ENCODE measurements at regions of chr13 and their contacts with region 1.

Region 1: DNA sequence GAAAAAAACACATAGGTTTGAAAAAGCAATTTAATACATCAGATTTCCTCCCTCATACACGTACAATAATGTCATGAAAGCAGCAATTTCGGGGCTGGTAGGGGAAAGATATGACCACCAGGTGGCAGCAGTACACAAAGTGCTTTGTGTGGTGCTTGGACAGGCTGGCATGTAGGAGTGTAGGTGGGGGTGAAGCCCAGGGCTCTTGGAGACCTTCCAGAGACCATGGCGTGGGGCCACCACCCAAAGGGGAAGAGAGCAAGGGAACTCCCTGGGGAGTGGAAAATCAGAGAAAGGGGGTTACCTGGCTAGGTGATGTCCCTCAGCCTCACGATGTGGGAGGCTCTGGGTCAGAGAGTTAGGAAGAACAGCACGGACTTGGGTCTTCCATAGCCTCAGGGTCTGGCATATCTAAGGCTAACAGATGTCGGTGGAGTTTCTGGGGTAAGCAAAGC is 11.8 kb upstream of the CCNA1 start:
- DNase-seq: peak; percentile 76
- ATAC-seq: peak; percentile 80
- H3K4me3 ChIP-seq: no peak overlapping the region
- H3K4me3 Mint-ChIP-seq: no peak overlapping the region
- H3K27ac ChIP-seq: no peak overlapping the region
- H3K27ac Mint-ChIP-seq: no peak overlapping the region
- H3K4me1 ChIP-seq: peaks cover 0 to 9% of the 10 kb centered on the region in 2 donors
- H3K4me1 Mint-ChIP-seq: peaks cover 6% of the 10 kb centered on the region
- H3K27me3 ChIP-seq: peaks cover 0 to 7% (median 2%) of the 10 kb centered on the region in 4 experiments
- H3K27me3 Mint-ChIP-seq: peaks cover 36% of the 10 kb centered on the region
- CTCF ChIP-seq: peak; percentile 97

Region 2: GRCh38 chr13:36346222-36347083 is 74.0 kb before region 1 on chr13 and contains the start of gene SPART:
- CTCF ChIA-PET with region 1: interaction called, 7 read pairs
- POLR2A ChIA-PET with region 1: no interaction called
- intact Hi-C with region 1: loop called (anchors 2 kb)
- DNase-seq: peak; percentile 92
- ATAC-seq: peak; percentile 85
- H3K4me3 ChIP-seq: peak within 1 kb of the TSS; percentile 64 to 98 (median 85)
- H3K4me3 Mint-ChIP-seq: peak within 1 kb of the TSS; percentile 95
- H3K27ac ChIP-seq: peak within 1 kb of the TSS; percentile 93 to 96
- H3K27ac Mint-ChIP-seq: peak within 1 kb of the TSS; percentile 96
- H3K4me1 ChIP-seq: peaks cover 10 to 16% of the 10 kb centered on the region in 2 donors
- H3K4me1 Mint-ChIP-seq: peaks cover 24% of the 10 kb centered on the region
- H3K27me3 ChIP-seq: no peaks in the 10 kb centered on the region
- H3K27me3 Mint-ChIP-seq: peaks cover 14% of the 10 kb centered on the region
- CTCF ChIP-seq: peak; percentile 88
- total RNA-seq, gene SPART: 18.6 and 20.8 TPM in 2 replicates

Region 3: GRCh38 chr13:36382030-36382429 is 38.4 kb before region 1 on chr13:
- CTCF ChIA-PET with region 1: no interaction called
- POLR2A ChIA-PET with region 1: no interaction called
- intact Hi-C with region 1: no loop called
- DNase-seq: no peak
- ATAC-seq: no peak
- H3K4me3 ChIP-seq: no peak overlapping the region
- H3K4me3 Mint-ChIP-seq: no peak overlapping the region
- H3K27ac ChIP-seq: no peak overlapping the region
- H3K27ac Mint-ChIP-seq: no peak overlapping the region
- H3K4me1 ChIP-seq: no peaks in the 10 kb centered on the region
- H3K4me1 Mint-ChIP-seq: no peaks in the 10 kb centered on the region
- H3K27me3 ChIP-seq: peaks cover 0 to 3% (median 0%) of the 10 kb centered on the region in 4 experiments
- H3K27me3 Mint-ChIP-seq: peaks cover 15% of the 10 kb centered on the region
- CTCF ChIP-seq: no peak

Region 4: GRCh38 chr13:36493046-36493445 is 72.6 kb after region 1 on chr13:
- CTCF ChIA-PET with region 1: no interaction called
- POLR2A ChIA-PET with region 1: no interaction called
- intact Hi-C with region 1: no loop called
- DNase-seq: no peak
- ATAC-seq: no peak
- H3K4me3 ChIP-seq: no peak overlapping the region
- H3K4me3 Mint-ChIP-seq: no peak overlapping the region
- H3K27ac ChIP-seq: no peak overlapping the region
- H3K27ac Mint-ChIP-seq: no peak overlapping the region
- H3K4me1 ChIP-seq: no peaks in the 10 kb centered on the region
- H3K4me1 Mint-ChIP-seq: no peaks in the 10 kb centered on the region
- H3K27me3 ChIP-seq: no peaks in the 10 kb centered on the region
- H3K27me3 Mint-ChIP-seq: peaks cover 7% of the 10 kb centered on the region
- CTCF ChIP-seq: no peak

Region 5: DNA sequence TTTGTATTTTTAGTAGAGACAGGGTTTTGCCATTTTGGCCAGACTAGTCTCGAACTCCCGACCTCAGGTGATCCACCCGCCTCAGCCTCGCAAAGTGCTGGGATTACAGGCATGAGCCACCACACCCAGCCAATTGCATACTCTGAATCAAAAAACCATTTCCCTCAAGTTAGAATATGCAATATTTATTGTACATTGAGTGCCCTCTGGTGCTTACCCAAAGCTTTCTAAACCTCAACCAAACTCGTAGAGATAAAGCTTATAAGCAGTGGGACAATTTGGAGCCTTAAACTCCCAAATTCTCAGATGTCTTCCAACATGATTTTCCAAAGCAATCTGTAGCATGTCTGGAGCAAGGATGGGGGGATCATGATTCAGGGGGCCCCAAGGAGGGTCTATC is 420.9 kb after region 1 on chr13:
- CTCF ChIA-PET with region 1: interaction called, 3 read pairs
- POLR2A ChIA-PET with region 1: no interaction called
- intact Hi-C with region 1: loop called (anchors 2 kb)
- DNase-seq: no peak
- ATAC-seq: no peak
- H3K4me3 ChIP-seq: no peak overlapping the region
- H3K4me3 Mint-ChIP-seq: no peak overlapping the region
- H3K27ac ChIP-seq: no peak overlapping the region
- H3K27ac Mint-ChIP-seq: no peak overlapping the region
- H3K4me1 ChIP-seq: no peaks in the 10 kb centered on the region
- H3K4me1 Mint-ChIP-seq: no peaks in the 10 kb centered on the region
- H3K27me3 ChIP-seq: no peaks in the 10 kb centered on the region
- H3K27me3 Mint-ChIP-seq: no peaks in the 10 kb centered on the region
- CTCF ChIP-seq: no peak